ENCODE measurements at regions of chr1 and their contacts with region 1.

Region 1: GRCh38 chr1:153510984-153511410 is 24.8 kb downstream of the S100A6 start:
- DNase-seq: peak; percentile 67 to 72 (median 69)
- H3K4me3 ChIP-seq: no peak overlapping the region
- H3K4me3 Mint-ChIP-seq: no peak overlapping the region
- H3K27ac ChIP-seq: no peak overlapping the region
- H3K27ac Mint-ChIP-seq: peak overlapping the region in 3 of 7 donors; percentile 30 to 49 (median 32)
- H3K4me1 ChIP-seq: peaks cover 8% of the 10 kb centered on the region
- H3K4me1 Mint-ChIP-seq: peaks cover 3 to 8% (median 5%) of the 10 kb centered on the region in 4 donors
- H3K27me3 ChIP-seq: no peaks in the 10 kb centered on the region
- H3K27me3 Mint-ChIP-seq: no peaks in the 10 kb centered on the region

Region 2: GRCh38 chr1:153483776-153484175 is 27.2 kb before region 1 on chr1:
- CTCF ChIA-PET with region 1: no interaction called
- POLR2A ChIA-PET with region 1: no interaction called
- intact Hi-C with region 1: no loop called
- DNase-seq: no peak
- H3K4me3 ChIP-seq: no peak overlapping the region
- H3K4me3 Mint-ChIP-seq: no peak overlapping the region
- H3K27ac ChIP-seq: no peak overlapping the region
- H3K27ac Mint-ChIP-seq: no peak overlapping the region
- H3K4me1 ChIP-seq: no peaks in the 10 kb centered on the region
- H3K4me1 Mint-ChIP-seq: peaks cover 0 to 1% (median 0%) of the 10 kb centered on the region in 4 donors
- H3K27me3 ChIP-seq: peaks cover 5% of the 10 kb centered on the region
- H3K27me3 Mint-ChIP-seq: peaks cover 24 to 37% of the 10 kb centered on the region in 2 donors

Region 3: GRCh38 chr1:153494976-153495535 is 15.9 kb before region 1 on chr1:
- CTCF ChIA-PET with region 1: interaction called, 11 read pairs
- POLR2A ChIA-PET with region 1: no interaction called
- intact Hi-C with region 1: no loop called
- DNase-seq: peak; percentile 49 to 72 (median 58)
- H3K4me3 ChIP-seq: no peak overlapping the region
- H3K4me3 Mint-ChIP-seq: no peak overlapping the region
- H3K27ac ChIP-seq: no peak overlapping the region
- H3K27ac Mint-ChIP-seq: peak overlapping the region in 1 of 7 donors; percentile 54
- H3K4me1 ChIP-seq: no peaks in the 10 kb centered on the region
- H3K4me1 Mint-ChIP-seq: peaks cover 0 to 19% (median 0%) of the 10 kb centered on the region in 4 donors
- H3K27me3 ChIP-seq: peaks cover 8% of the 10 kb centered on the region
- H3K27me3 Mint-ChIP-seq: peaks cover 10 to 23% of the 10 kb centered on the region in 2 donors

Region 4: GRCh38 chr1:153532769-153533599 is 22.0 kb after region 1 on chr1:
- CTCF ChIA-PET with region 1: interaction called, 74 read pairs
- POLR2A ChIA-PET with region 1: interaction called, 29 read pairs
- intact Hi-C with region 1: loop called (anchors 1 kb)
- DNase-seq: peak; percentile 76 to 82 (median 78)
- H3K4me3 ChIP-seq: peak overlapping the region; percentile 55 to 79
- H3K4me3 Mint-ChIP-seq: peak overlapping the region; percentile 88 to 98 (median 96)
- H3K27ac ChIP-seq: peak overlapping the region; percentile 92
- H3K27ac Mint-ChIP-seq: peak overlapping the region; percentile 88 to 98 (median 94)
- H3K4me1 ChIP-seq: peaks cover 62% of the 10 kb centered on the region
- H3K4me1 Mint-ChIP-seq: peaks cover 44 to 80% (median 57%) of the 10 kb centered on the region in 4 donors
- H3K27me3 ChIP-seq: no peaks in the 10 kb centered on the region
- H3K27me3 Mint-ChIP-seq: no peaks in the 10 kb centered on the region

Region 5: DNA sequence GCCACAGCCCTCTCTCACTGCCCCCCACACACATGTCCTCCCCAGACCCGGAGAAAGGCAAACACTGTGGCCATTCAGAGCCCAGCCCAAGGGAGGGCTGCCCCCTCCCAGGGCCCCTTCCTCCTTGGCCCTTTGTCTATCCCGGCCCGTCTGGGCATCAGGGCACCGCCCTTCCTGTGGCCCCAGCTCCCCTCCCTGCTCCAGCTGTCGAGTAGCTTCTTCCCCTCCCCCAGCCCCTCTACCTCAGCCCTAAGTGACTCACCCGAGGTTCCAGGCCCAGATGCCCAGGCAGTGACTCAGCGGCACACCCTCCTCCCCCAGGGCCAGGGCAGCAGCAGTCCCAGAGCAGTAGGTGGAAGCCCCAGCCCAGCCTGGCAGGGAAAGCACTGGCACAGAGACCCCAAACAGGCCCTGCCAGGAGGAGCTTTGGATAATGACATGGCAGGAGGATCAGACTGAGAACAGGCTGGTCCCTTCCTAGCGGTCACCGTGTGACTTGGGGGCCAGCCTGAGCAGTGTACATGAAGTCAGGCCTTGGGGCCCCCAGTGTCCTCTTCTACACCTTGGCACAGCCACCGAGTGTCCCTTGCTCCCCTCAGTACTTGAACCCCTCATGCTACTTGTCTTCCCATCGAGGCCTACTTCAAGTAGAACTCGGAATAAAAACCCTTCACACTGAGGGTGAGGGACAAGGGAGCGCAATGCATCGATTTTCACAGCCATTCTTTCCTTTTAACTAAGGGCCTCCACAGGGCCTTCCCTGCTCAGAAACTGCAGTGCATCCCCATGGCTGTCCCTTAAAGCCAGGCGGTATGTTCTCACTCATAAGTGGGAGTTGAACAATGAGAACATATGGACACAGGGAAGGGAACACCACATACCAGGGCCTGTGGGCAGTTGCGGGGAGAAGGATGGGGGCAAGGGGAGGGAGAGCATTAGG is 55.7 kb after region 1 on chr1:
- CTCF ChIA-PET with region 1: interaction called, 243 read pairs
- POLR2A ChIA-PET with region 1: interaction called, 13 read pairs
- intact Hi-C with region 1: loop called (anchors 1 kb)
- DNase-seq: peak; percentile 45 to 93 (median 55)
- H3K4me3 ChIP-seq: peak overlapping the region in 1 of 2 donors; percentile 16
- H3K4me3 Mint-ChIP-seq: peak overlapping the region in 7 of 8 donors; percentile 55 to 81 (median 65)
- H3K27ac ChIP-seq: peak overlapping the region; percentile 42
- H3K27ac Mint-ChIP-seq: peak overlapping the region; percentile 90 to 94 (median 92)
- H3K4me1 ChIP-seq: peaks cover 35% of the 10 kb centered on the region
- H3K4me1 Mint-ChIP-seq: peaks cover 22 to 36% (median 28%) of the 10 kb centered on the region in 4 donors
- H3K27me3 ChIP-seq: no peaks in the 10 kb centered on the region
- H3K27me3 Mint-ChIP-seq: no peaks in the 10 kb centered on the region

Region 6: DNA sequence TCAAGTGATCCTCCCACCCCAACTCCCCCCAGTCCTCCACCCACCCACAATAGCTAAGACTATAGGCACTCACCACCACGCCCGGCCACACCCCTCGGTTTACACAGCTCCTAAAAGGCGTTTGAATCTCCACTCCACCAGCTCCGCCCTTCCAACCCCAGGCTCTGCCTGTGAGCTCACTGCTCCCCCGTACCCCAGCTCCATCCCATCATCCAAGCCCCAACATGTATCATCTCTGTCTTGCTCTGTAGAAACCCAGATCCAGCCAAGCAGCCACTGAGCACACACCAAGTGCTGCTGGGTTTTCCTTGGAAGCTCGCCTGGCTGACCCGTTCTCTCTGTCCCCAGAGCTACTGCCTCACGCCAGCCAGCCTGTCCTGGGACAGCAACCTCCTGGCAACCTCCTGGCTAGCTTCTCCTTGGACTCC is 66.6 kb after region 1 on chr1:
- CTCF ChIA-PET with region 1: interaction called, 243 read pairs
- POLR2A ChIA-PET with region 1: no interaction called
- intact Hi-C with region 1: no loop called
- DNase-seq: no peak
- H3K4me3 ChIP-seq: no peak overlapping the region
- H3K4me3 Mint-ChIP-seq: no peak overlapping the region
- H3K27ac ChIP-seq: no peak overlapping the region
- H3K27ac Mint-ChIP-seq: peak overlapping the region in 2 of 7 donors; percentile 21 to 48
- H3K4me1 ChIP-seq: no peaks in the 10 kb centered on the region
- H3K4me1 Mint-ChIP-seq: peaks cover 0 to 6% (median under 1%) of the 10 kb centered on the region in 4 donors
- H3K27me3 ChIP-seq: peaks cover 4% of the 10 kb centered on the region
- H3K27me3 Mint-ChIP-seq: peaks cover 12 to 22% of the 10 kb centered on the region in 2 donors

Region 7: DNA sequence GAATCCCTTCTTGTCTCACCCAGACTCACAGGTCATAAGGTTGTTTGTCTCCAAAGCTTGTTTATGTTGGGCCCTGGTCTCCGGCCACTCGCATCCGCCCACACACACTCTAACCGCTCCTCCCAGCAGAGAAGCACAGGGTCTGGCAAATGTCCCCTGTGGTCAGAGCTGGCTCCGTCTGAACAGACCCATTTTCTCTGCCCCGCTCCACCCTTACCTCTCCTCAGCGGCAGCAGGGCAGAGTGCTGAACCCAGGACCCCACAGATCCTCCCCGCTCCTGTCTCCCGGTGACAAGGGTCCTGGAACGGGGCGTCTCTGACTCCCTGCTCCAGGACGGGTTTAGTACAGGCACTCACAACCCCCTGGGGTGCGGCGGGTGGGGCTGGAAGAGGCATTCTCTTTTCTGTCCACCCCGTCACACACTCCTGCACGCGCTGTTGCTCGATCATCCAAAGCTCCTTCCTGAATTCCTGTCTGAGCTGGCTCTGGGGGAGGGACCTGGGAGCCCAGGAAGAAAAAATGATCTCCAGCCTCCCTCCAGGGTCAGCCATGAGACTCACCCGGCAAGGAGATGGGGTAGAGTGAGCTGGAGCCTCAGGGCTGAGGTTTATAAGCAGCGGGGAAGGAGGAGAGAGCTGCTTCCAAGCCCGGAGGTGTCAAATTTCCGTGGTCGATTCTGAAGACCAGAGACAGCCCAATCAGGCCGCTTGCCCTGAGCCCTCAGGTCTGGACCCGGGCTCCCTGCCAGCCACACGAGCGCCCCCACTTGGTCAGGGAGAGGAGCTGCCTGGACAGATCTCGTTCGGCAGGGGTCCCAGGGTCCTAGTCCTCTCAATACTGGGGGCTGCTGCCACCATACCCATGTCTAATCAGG is 116.2 kb after region 1 on chr1 and contains the start of gene S100A13:
- CTCF ChIA-PET with region 1: interaction called, 12 read pairs
- POLR2A ChIA-PET with region 1: no interaction called
- intact Hi-C with region 1: no loop called
- DNase-seq: peak in 1 of 5 donors; percentile 18
- H3K4me3 ChIP-seq: no peak within 1 kb of the TSS
- H3K4me3 Mint-ChIP-seq: peak within 1 kb of the TSS in 2 of 8 donors; percentile 39
- H3K27ac ChIP-seq: no peak within 1 kb of the TSS
- H3K27ac Mint-ChIP-seq: no peak within 1 kb of the TSS
- H3K4me1 ChIP-seq: no peaks in the 10 kb centered on the region
- H3K4me1 Mint-ChIP-seq: peaks cover 0 to 6% (median under 1%) of the 10 kb centered on the region in 4 donors
- H3K27me3 ChIP-seq: no peaks in the 10 kb centered on the region
- H3K27me3 Mint-ChIP-seq: peaks cover 0 to 3% of the 10 kb centered on the region in 2 donors
- total RNA-seq, gene S100A13: 4.3 to 5.2 TPM

Region 8: DNA sequence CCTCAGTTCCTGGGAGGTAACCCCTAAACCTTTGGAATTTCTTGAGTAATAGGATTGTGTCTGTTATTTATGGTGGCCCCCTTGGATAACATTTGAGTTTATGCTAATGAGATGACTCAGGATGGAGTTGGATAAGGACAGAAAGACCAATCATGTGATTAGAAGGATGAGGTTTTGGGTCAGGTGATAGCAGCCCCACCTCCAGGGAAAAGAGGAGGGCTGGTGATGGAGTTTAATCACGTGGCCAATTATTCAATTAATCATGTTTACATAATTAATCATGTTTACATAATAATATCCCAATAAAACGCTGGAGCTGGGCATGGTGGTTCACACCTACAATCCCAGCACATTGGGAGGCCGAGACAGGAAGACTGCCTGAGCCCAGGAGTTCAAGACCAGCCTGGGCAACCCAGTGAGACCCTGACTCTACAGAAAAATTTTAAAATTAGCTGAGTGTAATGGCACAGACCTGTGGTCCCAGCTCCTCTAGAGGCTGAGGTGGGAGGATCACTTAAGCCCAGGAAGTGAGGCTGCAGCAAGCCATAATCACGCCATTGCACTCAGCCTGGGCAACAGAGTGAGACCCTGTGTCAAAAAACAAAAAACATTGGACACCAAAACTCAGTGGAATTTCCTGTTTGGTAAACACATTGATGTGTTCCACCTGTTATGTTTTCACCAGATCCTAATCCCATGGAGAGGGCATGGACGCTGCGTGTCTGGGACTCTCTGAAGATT is 570.6 kb after region 1 on chr1:
- CTCF ChIA-PET with region 1: no interaction called
- POLR2A ChIA-PET with region 1: no interaction called
- intact Hi-C with region 1: no loop called
- DNase-seq: no peak
- H3K4me3 ChIP-seq: no peak overlapping the region
- H3K4me3 Mint-ChIP-seq: no peak overlapping the region
- H3K27ac ChIP-seq: no peak overlapping the region
- H3K27ac Mint-ChIP-seq: no peak overlapping the region
- H3K4me1 ChIP-seq: no peaks in the 10 kb centered on the region
- H3K4me1 Mint-ChIP-seq: no peaks in the 10 kb centered on the region
- H3K27me3 ChIP-seq: no peaks in the 10 kb centered on the region
- H3K27me3 Mint-ChIP-seq: peaks cover 0 to 3% of the 10 kb centered on the region in 2 donors

Measured in CD4-positive, alpha-beta memory T cell (primary cell).